Activated T-helper 1 cell treated with anti-CD3 and anti-CD28 coated beads, Interleukin-12 subunit alpha, Interleukin-12 subunit beta, Interleukin-2, Interleukin-4 antibody, amounts not matched to agents 30 ng/mL and 10 ng/mL and 1 ng/mL, durations not matched to agents 14 hours and 24 hours and 36 hours (primary cell): ENCODE measurements at regions of chrX and their contacts with region 1.

Region 1: DNA sequence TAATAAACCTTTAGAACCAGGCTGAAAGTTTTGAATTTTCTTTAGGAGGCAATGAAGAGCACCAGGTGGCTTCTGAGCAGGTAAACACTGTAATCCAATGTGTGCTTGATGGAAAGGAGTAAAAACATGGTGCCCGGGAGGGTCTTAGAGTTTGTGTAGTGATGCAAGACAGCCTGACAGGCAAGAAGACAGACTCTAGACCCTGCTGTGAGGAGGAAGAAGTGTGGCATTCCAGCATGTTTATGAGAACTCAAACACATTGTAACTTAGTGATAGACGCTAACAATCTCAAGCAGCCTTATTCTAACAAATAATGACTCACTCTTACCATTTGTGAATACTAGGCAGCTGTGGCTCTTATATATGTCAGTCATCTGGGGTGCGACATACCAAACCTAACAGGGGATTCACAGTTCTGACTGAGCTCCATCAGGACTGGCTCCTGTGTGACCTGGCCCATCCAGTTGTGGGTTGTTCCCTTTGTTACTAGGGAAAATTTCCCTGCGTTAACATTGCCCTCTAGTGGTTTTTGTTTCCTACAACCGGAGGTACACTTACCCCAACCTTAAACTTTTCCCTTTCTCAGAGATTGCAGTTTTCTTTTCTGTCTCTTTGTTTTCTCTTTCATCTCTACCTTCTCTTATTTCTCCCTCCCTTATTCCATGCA is 53.8 kb downstream of the VSIG4 start:
- DNase-seq: peak; percentile 37
- H3K4me3 Mint-ChIP-seq: peak overlapping the region; percentile 5
- H3K27ac Mint-ChIP-seq: peak overlapping the region; percentile 83
- H3K4me1 Mint-ChIP-seq: peaks cover 21% of the 10 kb centered on the region
- H3K27me3 Mint-ChIP-seq: peaks cover 2% of the 10 kb centered on the region

Region 2: DNA sequence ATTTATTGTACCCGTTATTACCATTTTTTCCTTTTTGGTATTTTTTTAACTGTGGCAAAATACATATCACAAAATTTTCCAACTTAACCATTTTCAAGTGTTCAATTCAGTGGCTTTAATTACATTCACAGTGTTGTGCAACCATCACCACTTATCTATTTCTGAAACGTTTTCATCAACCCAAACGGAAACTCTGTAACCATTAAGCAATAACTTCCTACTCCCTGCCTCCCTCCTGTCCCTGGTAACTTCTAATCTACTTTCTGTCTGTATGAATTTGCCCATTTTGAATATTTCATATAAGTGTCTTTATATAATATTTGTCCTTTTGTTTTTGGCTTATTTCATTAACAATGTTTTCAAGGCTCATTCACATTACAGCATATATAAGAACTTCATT is 376.0 kb before region 1 on chrX:
- intact Hi-C with region 1: no loop called
- DNase-seq: no peak
- H3K4me3 Mint-ChIP-seq: peak overlapping the region; percentile 33
- H3K27ac Mint-ChIP-seq: peak overlapping the region; percentile 68
- H3K4me1 Mint-ChIP-seq: peaks cover 43% of the 10 kb centered on the region
- H3K27me3 Mint-ChIP-seq: no peaks in the 10 kb centered on the region

Region 3: GRCh38 chrX:65667503-65668376 is 318.3 kb before region 1 on chrX and contains the start of gene MSN:
- intact Hi-C with region 1: loop called (anchors 2 kb)
- DNase-seq: peak; percentile 74
- H3K4me3 Mint-ChIP-seq: peak within 1 kb of the TSS; percentile 98
- H3K27ac Mint-ChIP-seq: peak within 1 kb of the TSS; percentile 97
- H3K4me1 Mint-ChIP-seq: peaks cover 43% of the 10 kb centered on the region
- H3K27me3 Mint-ChIP-seq: no peaks in the 10 kb centered on the region
- total RNA-seq, gene MSN: 479 and 484 TPM in 2 replicates

Region 4: DNA sequence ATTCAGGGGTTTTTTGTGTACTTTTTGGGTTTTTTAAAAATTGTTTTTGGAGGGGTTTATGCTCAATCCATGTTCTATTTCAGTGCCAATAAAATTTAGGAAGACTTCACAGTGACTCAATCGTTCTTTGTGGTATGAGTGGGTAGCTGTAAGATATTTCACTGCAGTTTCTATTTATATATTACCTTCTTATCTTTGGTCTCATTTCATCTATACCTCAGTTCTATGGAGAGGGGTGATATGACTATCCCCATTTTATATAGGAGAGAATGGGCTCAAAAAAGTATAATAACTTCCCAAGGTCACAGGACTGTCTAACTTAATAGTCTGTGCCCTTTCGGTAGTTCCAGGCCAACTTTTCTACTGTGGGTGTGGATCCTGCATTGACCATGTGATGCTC is 244.2 kb before region 1 on chrX:
- intact Hi-C with region 1: loop called (anchors 2 kb)
- DNase-seq: no peak
- H3K4me3 Mint-ChIP-seq: peak overlapping the region; percentile 45
- H3K27ac Mint-ChIP-seq: peak overlapping the region; percentile 84
- H3K4me1 Mint-ChIP-seq: peaks cover 42% of the 10 kb centered on the region
- H3K27me3 Mint-ChIP-seq: no peaks in the 10 kb centered on the region

Region 5: DNA sequence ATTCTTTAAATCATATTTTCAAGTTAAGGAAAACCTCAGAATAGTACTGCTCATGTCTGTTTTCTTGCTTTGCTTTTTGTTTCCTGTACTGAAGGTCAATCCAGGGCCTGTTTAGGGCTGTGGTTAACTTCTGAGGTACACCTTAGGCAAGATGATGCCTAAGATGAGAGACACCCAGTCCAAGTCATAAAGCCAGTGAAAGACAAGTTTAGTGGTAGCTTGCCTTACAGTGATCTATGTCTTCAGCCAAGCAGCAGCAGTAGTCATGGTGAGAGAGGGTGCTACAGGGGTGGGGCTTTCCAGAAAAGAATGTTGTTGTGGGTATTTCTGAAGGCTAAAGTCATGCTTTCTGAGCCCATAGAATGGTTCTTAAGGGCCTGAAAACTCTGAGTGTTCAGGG is 119.9 kb before region 1 on chrX:
- intact Hi-C with region 1: loop called (anchors 2 kb)
- DNase-seq: peak; percentile 31
- H3K4me3 Mint-ChIP-seq: no peak overlapping the region
- H3K27ac Mint-ChIP-seq: peak overlapping the region; percentile 67
- H3K4me1 Mint-ChIP-seq: peaks cover 24% of the 10 kb centered on the region
- H3K27me3 Mint-ChIP-seq: no peaks in the 10 kb centered on the region

Region 6: DNA sequence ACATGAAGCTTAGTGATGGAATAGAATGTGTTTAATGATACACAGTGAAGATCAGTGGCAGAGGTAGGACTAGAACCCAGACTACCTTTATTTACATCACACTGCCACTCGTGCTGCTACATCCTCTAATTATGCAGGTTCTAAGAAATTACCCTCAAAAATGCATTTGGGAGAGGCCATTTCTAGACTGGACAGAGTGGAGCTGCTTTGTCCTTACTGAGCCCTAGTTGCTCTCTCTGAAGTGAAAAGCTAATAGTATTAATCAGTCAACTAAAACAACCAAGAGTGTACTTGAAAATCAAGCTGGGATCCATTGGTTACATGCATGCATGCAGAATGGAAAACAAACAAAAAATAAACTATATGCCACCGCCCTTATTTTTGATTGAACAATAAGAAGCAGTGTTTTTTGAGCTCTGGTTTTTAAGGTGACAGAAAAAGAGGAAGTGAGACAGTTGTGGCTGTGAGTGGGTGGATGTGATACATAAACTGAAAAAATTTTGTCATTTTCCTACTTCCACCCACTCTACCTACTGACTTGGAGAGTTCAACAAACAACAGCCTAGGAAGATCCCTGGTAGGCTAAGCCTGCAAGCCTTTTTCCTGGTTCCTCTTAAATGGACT is 60.7 kb after region 1 on chrX:
- intact Hi-C with region 1: loop called (anchors 2 kb)
- DNase-seq: peak; percentile 14
- H3K4me3 Mint-ChIP-seq: peak overlapping the region; percentile 69
- H3K27ac Mint-ChIP-seq: peak overlapping the region; percentile 100
- H3K4me1 Mint-ChIP-seq: peaks cover 40% of the 10 kb centered on the region
- H3K27me3 Mint-ChIP-seq: no peaks in the 10 kb centered on the region